ENCODE measurements at regions of chr3 and their contacts with region 1.

Region 1: DNA sequence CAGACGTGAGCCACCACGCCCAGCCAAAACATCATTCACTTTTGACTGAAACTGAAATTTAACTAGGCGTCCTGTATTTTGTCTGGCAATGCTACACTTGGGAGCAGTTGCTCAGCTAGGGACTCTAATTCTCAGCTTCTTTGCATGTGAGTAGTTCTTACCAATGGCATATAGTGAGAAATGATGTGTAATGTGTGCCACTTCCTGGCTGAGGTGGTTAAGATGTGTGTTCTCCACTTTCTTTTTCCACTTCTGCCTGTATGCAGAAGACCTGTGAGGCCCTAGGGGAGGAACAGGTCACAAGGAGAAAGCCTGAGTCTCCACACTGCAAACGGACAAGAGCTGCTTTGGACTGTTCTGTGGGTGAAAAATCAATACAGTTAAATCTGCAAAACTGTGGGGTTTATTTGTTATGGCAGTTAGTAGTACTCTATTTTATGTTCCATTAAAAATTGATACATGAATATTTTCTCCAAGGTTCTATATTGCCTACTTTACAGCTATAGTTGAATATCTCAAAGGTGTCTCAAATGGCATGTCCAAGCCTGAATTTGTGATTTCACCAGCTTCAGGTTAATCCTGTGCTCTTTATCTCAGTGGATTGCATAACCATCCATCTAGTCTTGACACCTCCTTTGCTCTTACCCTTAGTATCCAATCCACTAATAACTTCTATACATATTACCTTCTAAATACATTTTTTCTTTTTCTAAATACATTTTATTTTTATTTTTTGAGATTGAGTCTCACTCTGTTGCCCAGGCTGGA is 59.3 kb downstream of the NR1D2 start:
- DNase-seq: peak; percentile 60
- H3K4me3 Mint-ChIP-seq: no peak overlapping the region
- H3K27ac Mint-ChIP-seq: no peak overlapping the region
- H3K4me1 Mint-ChIP-seq: peaks cover 5% of the 10 kb centered on the region
- H3K27me3 Mint-ChIP-seq: peaks cover 28% of the 10 kb centered on the region

Region 2: DNA sequence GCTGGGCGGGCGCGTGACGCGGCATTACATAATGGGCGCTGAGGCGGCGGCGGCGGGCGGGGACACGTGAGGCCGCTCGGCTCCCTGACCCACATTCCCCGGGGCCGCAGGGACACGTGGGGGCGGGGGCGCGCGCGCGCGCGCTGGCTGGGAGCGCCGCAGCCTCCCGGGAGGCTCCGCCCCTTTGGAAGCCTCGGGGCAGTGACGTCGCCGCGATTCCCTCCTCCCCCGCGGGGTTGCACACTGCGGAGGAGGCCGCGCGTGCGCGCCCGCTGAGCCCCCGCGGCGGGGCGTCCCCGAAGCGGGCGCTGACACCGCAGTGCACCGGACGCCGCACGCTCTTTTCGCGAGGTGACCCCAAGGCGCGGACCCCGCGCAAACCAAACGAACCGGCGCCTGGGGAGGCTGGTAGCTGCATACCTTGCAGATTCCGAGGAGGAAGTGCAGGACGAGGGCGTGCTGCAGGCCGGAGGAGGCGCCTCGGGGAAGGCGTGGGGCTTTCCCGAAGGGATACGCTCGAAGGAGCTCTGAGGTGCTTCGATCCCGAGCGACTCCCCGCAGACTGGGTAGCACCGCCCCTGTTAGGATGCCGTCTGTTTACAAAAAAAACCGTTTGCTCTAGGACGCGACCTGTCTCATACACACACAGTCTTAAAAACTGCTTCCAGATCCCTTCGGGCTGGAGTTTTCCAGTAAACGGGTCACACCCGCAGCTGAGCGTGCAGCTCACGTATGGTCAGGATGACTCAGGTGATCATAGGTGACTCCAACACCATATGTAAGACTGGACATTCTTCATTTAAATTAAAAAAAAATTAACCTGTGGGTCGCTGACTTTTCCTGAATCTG is 58.2 kb before region 1 on chr3:
- intact Hi-C with region 1: loop called (anchors 2 kb)
- DNase-seq: peak; percentile 97
- H3K4me3 Mint-ChIP-seq: peak overlapping the region; percentile 85
- H3K27ac Mint-ChIP-seq: peak overlapping the region; percentile 87
- H3K4me1 Mint-ChIP-seq: peaks cover 26% of the 10 kb centered on the region
- H3K27me3 Mint-ChIP-seq: peaks cover 33% of the 10 kb centered on the region